GM12878 (cell line): ENCODE measurements at regions of chr20 and their contacts with region 1.

Region 1: DNA sequence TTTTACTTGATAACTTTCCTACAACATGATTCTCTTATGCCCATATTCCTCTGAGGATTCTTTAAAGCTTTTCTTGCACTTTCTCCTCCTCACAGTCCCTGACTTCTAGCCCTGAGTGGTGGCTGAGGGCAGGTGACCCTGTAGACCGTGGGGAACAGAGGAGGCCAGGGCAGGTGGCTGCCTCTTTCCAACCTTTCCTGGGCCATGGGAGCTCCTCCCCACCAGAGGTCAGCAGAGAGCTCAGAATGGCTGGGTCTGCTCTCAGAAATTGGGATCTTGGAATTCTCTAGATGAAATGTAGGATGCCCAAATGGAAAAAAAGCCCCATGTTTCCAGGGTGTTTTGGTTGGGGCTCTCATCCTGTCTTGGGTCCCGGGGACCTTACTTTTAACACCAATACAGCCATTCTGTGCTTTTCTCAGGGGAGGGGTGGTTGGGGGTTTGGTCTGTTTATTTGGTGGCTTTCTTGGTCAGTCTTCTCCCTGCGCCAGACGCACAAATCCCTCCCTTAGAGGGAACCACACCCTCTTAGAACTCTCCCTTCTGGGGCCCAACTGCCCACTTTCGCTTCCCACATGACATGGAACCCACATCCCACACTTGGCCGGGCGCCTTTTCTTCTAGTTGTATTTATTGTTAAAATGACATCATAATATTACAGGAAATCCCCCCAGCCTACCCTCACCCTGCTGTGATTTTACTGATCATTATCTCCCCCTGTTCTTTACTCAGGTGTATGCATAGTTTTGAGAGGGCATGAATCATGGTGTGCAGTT is 17.9 kb downstream of the GNAS start:
- DNase-seq: no peak
- ATAC-seq: peak; percentile 91
- H3K4me3 ChIP-seq: no peak overlapping the region
- H3K27ac ChIP-seq: no peak overlapping the region
- H3K4me1 ChIP-seq: peaks cover 10% of the 10 kb centered on the region
- H3K27me3 ChIP-seq: no peaks in the 10 kb centered on the region
- CTCF ChIP-seq: peak; percentile 81 to 87 (median 87)
- EP300 ChIP-seq: peak; percentile 33 to 48; a peak in 1 of 4 replicates
- POLR2A ChIP-seq: no peak
- RAD21 ChIP-seq: peak; percentile 82

Region 2: DNA sequence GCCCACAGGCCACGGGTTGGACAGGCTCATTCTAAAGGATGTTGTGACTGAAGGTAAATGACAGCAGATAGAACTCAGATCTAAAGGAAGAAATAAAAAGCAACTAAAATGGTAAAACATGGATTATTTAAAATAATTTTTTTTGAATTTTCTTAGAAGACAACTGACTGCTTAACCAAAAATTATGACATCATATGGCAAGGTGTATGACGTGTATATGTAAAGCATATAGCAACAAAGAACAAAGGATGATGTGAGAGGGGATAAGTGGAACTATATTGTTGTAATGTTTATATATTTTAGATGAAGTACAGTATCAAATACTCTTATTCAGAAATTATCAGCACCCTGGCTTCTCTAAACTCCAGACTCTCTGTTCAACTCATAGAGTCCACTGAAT is 139.2 kb before region 1 on chr20:
- CTCF ChIA-PET with region 1: no interaction called
- POLR2A ChIA-PET with region 1: no interaction called
- RAD21 ChIA-PET with region 1: no interaction called
- SMC1A ChIA-PET with region 1: no interaction called
- in situ Hi-C with region 1: no loop called
- intact Hi-C with region 1: no loop called
- DNase-seq: no peak
- ATAC-seq: no peak
- H3K4me3 ChIP-seq: no peak overlapping the region
- H3K27ac ChIP-seq: no peak overlapping the region
- H3K4me1 ChIP-seq: no peaks in the 10 kb centered on the region
- H3K27me3 ChIP-seq: peaks cover 0 to 3% of the 10 kb centered on the region in 2 experiments; a peak in 1 of 4 replicates
- CTCF ChIP-seq: no peak
- EP300 ChIP-seq: no peak
- POLR2A ChIP-seq: no peak
- RAD21 ChIP-seq: no peak

Region 3: DNA sequence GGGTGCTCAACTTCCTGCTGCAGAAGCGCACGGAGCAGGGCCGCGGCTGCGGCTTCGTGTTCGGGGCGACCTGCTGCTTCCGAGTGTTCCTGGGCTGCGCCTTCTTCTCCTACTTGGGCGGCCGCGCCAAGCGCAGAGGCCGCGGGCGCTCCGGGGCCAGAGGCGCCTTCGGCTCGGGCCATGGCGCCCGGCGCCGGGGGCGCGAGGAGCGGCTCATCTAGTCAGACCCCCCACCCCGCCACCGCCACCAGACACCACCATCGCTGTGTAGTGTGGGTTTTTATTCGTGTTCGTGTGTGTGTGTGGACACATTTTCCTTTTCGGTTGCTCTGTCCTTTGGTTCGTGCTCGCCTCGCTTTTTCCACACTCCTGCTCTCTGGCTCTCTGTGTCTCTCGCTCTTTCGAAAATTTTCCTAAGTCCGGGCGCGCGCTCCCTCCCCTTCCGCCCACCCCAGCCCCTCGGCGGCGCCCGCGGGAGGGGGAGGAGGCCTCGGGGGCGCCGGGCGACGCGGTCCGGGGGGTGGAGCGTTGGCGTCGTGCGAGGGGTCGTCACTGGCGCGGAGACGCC is 20.2 kb after region 1 on chr20:
- CTCF ChIA-PET with region 1: interaction called, 7 read pairs
- POLR2A ChIA-PET with region 1: no interaction called
- RAD21 ChIA-PET with region 1: interaction called, 4 read pairs
- SMC1A ChIA-PET with region 1: interaction called, 8 read pairs
- in situ Hi-C with region 1: no loop called
- intact Hi-C with region 1: loop called (anchors 2 kb)
- DNase-seq: no peak
- ATAC-seq: peak; percentile 50
- H3K4me3 ChIP-seq: peak overlapping the region; percentile 76
- H3K27ac ChIP-seq: peak overlapping the region; percentile 87
- H3K4me1 ChIP-seq: peaks cover 30% of the 10 kb centered on the region
- H3K27me3 ChIP-seq: no peaks in the 10 kb centered on the region
- CTCF ChIP-seq: no peak
- EP300 ChIP-seq: no peak
- POLR2A ChIP-seq: peak; percentile 72
- RAD21 ChIP-seq: no peak

Region 4: DNA sequence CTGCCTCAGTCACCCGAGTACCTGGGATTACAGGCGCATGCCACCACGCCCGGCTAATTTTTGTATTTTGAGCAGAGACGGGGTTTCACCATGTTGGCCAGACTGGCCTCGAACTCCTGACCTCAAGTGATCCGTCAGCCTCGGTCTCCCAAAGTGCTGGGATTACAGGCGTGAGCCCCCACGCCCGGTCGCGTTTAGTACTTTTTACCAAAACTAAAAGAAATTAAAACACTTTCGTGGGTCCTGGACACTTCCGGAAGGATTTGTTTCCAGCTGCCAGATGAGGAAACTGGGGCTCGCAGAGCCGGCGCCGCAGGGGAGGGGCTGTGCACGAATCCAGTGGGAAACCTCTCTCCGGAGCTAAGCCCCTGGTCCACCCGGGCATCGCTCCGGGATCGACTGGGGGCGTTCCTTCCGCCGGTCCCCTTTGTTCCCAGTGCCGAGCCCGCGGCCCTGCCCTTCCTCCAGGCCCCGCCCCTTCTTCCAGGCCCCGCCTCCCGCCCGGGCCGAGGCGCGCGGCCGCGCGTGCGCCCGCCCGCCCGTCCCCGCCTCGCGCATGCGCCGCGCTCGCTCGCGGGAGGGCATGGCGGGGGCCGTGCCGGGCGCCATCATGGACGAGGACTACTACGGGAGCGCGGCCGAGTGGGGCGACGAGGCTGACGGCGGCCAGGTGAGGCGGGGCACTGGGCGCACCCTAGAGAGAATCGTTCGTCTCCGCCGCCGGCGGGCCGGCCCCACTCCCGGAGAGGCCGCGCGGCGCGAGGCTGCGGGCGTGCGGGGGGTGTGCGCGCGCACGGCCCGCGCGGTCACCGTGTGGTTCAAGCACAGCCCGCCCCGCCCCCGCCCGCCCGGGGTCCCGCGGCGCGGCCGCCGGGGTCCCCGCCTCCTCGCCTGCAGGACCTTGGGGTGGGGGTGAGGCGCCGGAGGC is 110.5 kb after region 1 on chr20 and contains the start of gene NELFCD:
- CTCF ChIA-PET with region 1: interaction called, 6 read pairs
- POLR2A ChIA-PET with region 1: interaction called, 3 read pairs
- RAD21 ChIA-PET with region 1: interaction called, 6 read pairs
- SMC1A ChIA-PET with region 1: interaction called, 4 read pairs
- in situ Hi-C with region 1: no loop called
- intact Hi-C with region 1: loop called (anchors 5 kb)
- DNase-seq: no peak
- ATAC-seq: peak; percentile 68
- H3K4me3 ChIP-seq: peak within 1 kb of the TSS; percentile 99
- H3K27ac ChIP-seq: peak within 1 kb of the TSS; percentile 87
- H3K4me1 ChIP-seq: peaks cover 38% of the 10 kb centered on the region
- H3K27me3 ChIP-seq: no peaks in the 10 kb centered on the region
- CTCF ChIP-seq: no peak
- EP300 ChIP-seq: no peak
- POLR2A ChIP-seq: peak; percentile 91
- RAD21 ChIP-seq: no peak
- polyA plus RNA-seq, gene NELFCD: 8.9 to 16.7 TPM

Region 5: GRCh38 chr20:59222253-59223181 is 352.1 kb after region 1 on chr20:
- CTCF ChIA-PET with region 1: interaction called, 22 read pairs
- POLR2A ChIA-PET with region 1: no interaction called
- RAD21 ChIA-PET with region 1: interaction called, 14 read pairs
- SMC1A ChIA-PET with region 1: interaction called, 13 read pairs
- in situ Hi-C with region 1: no loop called
- intact Hi-C with region 1: loop called (anchors 1 kb)
- DNase-seq: peak; percentile 1
- ATAC-seq: peak; percentile 100
- H3K4me3 ChIP-seq: peak overlapping the region; percentile 40; the same call in 1 of the 2 replicates
- H3K27ac ChIP-seq: no peak overlapping the region
- H3K4me1 ChIP-seq: no peaks in the 10 kb centered on the region
- H3K27me3 ChIP-seq: peaks cover 8 to 11% of the 10 kb centered on the region in 2 experiments
- CTCF ChIP-seq: peak; percentile 93 to 96 (median 94)
- EP300 ChIP-seq: no peak
- POLR2A ChIP-seq: no peak
- RAD21 ChIP-seq: peak; percentile 85